ENCODE measurements at regions of chr10 and their contacts with region 1.

Region 1: GRCh38 chr10:103888113-103888841 is 29.7 kb downstream of the STN1 start:
- DNase-seq: peak; percentile 93
- H3K4me3 ChIP-seq: no peak overlapping the region
- H3K27ac ChIP-seq: peak overlapping the region; percentile 33
- H3K4me1 ChIP-seq: peaks cover 22% of the 10 kb centered on the region
- H3K27me3 ChIP-seq: no peaks in the 10 kb centered on the region
- CTCF ChIP-seq: peak; percentile 68 to 73
- POLR2A ChIP-seq: no peak

Region 2: GRCh38 chr10:103820101-103821062 is 67.9 kb before region 1 on chr10:
- CTCF ChIA-PET with region 1: no interaction called
- POLR2A ChIA-PET with region 1: no interaction called
- dilution Hi-C with region 1: no loop called
- intact Hi-C with region 1: no loop called
- DNase-seq: peak; percentile 57
- H3K4me3 ChIP-seq: no peak overlapping the region
- H3K27ac ChIP-seq: no peak overlapping the region
- H3K4me1 ChIP-seq: peaks cover 6% of the 10 kb centered on the region
- H3K27me3 ChIP-seq: peaks cover 0 to 2% of the 10 kb centered on the region in 2 experiments
- CTCF ChIP-seq: no peak
- POLR2A ChIP-seq: no peak

Region 3: GRCh38 chr10:103833731-103834365 is 54.4 kb before region 1 on chr10:
- CTCF ChIA-PET with region 1: no interaction called
- POLR2A ChIA-PET with region 1: no interaction called
- dilution Hi-C with region 1: no loop called
- intact Hi-C with region 1: no loop called
- DNase-seq: no peak
- H3K4me3 ChIP-seq: no peak overlapping the region
- H3K27ac ChIP-seq: no peak overlapping the region
- H3K4me1 ChIP-seq: peaks cover 2% of the 10 kb centered on the region
- H3K27me3 ChIP-seq: no peaks in the 10 kb centered on the region
- CTCF ChIP-seq: no peak
- POLR2A ChIP-seq: no peak

Region 4: DNA sequence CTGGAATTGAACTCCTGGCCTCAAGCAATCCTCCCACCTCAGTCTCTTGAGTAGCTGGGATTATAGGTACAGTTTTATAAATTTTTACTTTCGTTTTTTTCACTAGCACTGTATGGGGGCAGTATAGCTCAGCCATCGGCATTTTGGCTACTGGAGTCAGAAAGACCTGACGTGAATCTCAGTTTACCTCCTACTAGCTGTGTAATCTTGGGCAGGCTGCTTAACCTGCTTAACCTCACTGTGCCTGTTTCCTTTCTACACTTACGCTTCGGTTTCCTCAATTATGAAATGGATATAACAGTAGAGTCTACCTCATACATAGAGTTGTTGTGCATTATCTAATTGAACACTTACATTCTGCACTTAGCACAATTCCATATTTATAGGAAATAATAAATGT is 13.0 kb after region 1 on chr10:
- CTCF ChIA-PET with region 1: interaction called, 13 read pairs
- POLR2A ChIA-PET with region 1: no interaction called
- dilution Hi-C with region 1: no loop called
- intact Hi-C with region 1: no loop called
- DNase-seq: peak; percentile 31
- H3K4me3 ChIP-seq: no peak overlapping the region
- H3K27ac ChIP-seq: no peak overlapping the region
- H3K4me1 ChIP-seq: peaks cover 7% of the 10 kb centered on the region
- H3K27me3 ChIP-seq: no peaks in the 10 kb centered on the region
- CTCF ChIP-seq: no peak
- POLR2A ChIP-seq: no peak

Region 5: DNA sequence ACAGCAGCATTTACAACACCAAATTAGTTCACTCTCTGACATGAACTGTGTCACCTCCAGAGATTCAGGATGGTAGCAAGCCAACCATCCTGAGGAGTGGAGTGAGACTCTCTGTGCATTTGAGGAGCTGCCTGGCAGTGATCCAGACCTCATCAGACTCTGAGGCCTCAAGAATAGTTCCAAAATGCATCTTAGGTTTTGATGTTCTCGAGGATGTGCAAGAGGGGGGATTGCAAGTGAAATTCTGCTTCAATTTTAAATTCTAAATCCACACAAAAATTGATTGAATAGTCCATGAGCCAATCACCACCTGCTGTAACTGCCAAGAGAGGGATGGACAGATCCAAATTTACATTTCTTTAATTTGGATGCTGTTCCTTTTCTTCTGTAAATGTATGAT is 128.4 kb after region 1 on chr10:
- CTCF ChIA-PET with region 1: interaction called, 16 read pairs
- POLR2A ChIA-PET with region 1: no interaction called
- dilution Hi-C with region 1: no loop called
- intact Hi-C with region 1: no loop called
- DNase-seq: no peak
- H3K4me3 ChIP-seq: no peak overlapping the region
- H3K27ac ChIP-seq: no peak overlapping the region
- H3K4me1 ChIP-seq: peaks cover 13% of the 10 kb centered on the region
- H3K27me3 ChIP-seq: no peaks in the 10 kb centered on the region
- CTCF ChIP-seq: no peak
- POLR2A ChIP-seq: no peak

Region 6: GRCh38 chr10:104045151-104046089 is 157.1 kb after region 1 on chr10:
- CTCF ChIA-PET with region 1: interaction called, 16 read pairs
- POLR2A ChIA-PET with region 1: no interaction called
- dilution Hi-C with region 1: no loop called
- intact Hi-C with region 1: loop called (anchors 1 kb)
- DNase-seq: peak; percentile 76
- H3K4me3 ChIP-seq: no peak overlapping the region
- H3K27ac ChIP-seq: no peak overlapping the region
- H3K4me1 ChIP-seq: peaks cover 17% of the 10 kb centered on the region
- H3K27me3 ChIP-seq: no peaks in the 10 kb centered on the region
- CTCF ChIP-seq: peak; percentile 56 to 86
- POLR2A ChIP-seq: no peak

Region 7: DNA sequence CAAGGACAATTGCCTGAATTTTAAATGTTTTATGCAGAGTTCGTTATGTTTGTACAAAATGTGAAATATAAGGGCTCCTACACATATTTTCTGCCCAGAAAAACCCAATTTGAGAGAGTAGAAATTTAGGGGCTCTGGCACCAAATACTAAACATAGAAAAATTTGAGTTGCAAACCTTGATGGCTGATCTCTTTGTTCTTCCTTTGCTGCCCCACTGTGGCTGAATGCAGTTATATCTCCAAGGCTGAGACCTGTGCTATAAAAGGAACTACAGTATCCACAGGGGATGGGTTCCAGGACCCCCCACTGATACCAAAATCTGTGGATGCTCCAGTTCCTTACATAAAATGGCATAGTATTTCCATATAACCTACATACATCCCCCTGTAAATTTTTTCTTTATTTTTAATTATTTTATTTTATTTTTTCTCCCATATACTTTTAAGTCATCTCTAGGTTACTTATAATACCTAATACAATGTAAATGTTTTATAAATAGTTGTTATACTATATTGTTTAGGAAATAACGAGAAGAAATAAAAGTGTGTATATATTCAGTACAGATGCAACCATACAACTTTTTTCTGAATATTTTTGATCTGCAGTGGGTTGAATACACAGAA is 321.4 kb after region 1 on chr10:
- CTCF ChIA-PET with region 1: interaction called, 30 read pairs
- POLR2A ChIA-PET with region 1: no interaction called
- dilution Hi-C with region 1: no loop called
- intact Hi-C with region 1: loop called (anchors 1 kb)
- DNase-seq: peak; percentile 55
- H3K4me3 ChIP-seq: no peak overlapping the region
- H3K27ac ChIP-seq: no peak overlapping the region
- H3K4me1 ChIP-seq: no peaks in the 10 kb centered on the region
- H3K27me3 ChIP-seq: peaks cover 2 to 8% of the 10 kb centered on the region in 2 experiments
- CTCF ChIP-seq: peak; percentile 42 to 51
- POLR2A ChIP-seq: no peak

Measured in endothelial cell of umbilical vein (primary cell).